ENCODE measurements at regions of chr6 and their contacts with region 1.

Region 1: DNA sequence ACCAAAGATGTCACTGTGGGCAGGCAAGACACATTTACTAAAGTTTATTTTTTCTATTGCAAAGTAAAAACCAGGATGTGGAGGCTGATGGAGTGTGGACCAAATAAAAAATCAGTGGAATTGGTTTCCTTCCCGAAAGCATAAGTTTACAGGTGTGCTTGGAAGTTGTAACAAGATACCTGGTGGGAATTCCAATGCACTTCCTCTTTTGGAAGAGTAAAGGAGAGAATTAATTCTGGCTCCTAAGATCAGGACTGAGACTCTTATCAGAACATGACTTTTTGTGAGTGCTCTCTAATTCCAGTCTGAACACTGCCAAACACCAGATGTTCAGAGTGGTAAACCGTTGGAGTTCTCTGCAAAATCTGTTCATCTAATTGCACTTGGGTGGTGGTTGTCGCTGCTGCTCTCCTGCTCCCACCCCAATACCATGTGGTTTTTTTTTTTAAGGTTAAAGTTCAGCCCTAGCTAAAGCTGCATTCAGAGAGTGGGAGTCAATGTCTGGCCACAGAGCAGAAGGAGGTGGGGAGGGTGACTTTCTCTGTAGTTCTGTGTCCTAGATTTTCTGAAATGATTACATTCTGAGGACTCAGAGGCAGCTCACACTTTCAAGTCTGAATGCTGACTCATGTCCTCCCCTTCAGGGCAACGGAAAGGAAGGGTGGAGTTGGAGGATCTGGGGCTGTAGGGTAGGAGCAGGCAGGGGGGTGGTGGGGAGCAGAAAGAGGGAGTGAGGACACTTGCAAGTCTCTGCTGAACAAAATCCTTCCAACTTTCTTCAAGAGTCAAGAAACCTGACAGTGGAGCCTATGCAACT is 275.8 kb upstream of the PRDM1 start:
- DNase-seq: peak; percentile 91
- ATAC-seq: peak; percentile 90
- H3K4me3 Mint-ChIP-seq: peak overlapping the region; percentile 5
- H3K27ac Mint-ChIP-seq: peak overlapping the region; percentile 87
- H3K4me1 Mint-ChIP-seq: peaks cover 79% of the 10 kb centered on the region
- H3K27me3 Mint-ChIP-seq: no peaks in the 10 kb centered on the region

Region 2: DNA sequence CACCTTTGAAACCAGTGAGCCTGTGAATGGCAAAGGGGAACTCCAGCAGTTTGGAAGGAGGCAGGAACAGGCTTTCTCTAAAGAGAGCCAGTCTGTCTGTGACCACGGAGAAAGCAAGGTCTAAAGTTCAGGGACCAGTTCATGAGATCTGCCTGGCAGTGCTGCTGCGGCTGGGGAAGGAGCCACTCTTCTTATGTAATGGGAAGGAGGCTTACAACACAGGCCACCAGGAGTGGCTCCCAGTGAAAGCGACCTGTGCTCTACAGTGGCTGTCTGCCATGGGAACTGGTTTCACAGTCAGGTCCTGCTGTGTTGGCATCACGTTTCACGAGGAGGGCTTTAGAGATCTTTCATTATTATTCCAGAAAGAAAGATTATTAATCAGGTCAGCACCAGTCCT is 16.1 kb before region 1 on chr6:
- CTCF ChIA-PET with region 1: interaction called, 10 read pairs
- DNase-seq: no peak
- ATAC-seq: no peak
- H3K4me3 Mint-ChIP-seq: no peak overlapping the region
- H3K27ac Mint-ChIP-seq: peak overlapping the region; percentile 29
- H3K4me1 Mint-ChIP-seq: peaks cover 87% of the 10 kb centered on the region
- H3K27me3 Mint-ChIP-seq: no peaks in the 10 kb centered on the region

Region 3: DNA sequence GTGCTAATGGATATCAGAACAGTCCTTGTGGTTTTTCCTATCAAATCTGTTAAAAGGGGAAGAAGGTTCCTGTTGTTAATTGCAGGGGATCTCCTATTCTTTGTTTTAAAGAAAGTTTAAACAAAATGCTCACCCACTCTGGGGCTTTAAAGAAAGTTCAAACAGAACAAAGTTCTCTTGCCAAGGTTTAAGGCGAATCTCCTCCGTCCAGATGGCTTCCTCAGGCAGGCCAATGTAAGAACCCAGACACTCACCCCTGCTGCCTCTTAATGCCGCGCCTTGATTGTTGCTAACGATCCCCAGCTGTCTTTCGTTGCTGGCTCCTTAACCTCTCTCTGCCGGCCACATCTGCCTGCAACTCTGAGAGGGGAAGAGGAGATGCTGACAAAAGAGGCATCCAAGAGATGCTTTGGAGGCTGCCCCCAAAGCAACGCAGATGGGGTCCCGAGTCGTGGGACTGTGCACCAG is 40.8 kb after region 1 on chr6:
- CTCF ChIA-PET with region 1: no interaction called
- DNase-seq: no peak
- ATAC-seq: no peak
- H3K4me3 Mint-ChIP-seq: no peak overlapping the region
- H3K27ac Mint-ChIP-seq: no peak overlapping the region
- H3K4me1 Mint-ChIP-seq: no peaks in the 10 kb centered on the region
- H3K27me3 Mint-ChIP-seq: no peaks in the 10 kb centered on the region